Left ventricle myocardium superior (tissue), 1 donor: ENCODE measurements at regions of chr19 and their contacts with region 1.

Region 1: GRCh38 chr19:6048808-6049405 is 61.4 kb downstream of the RFX2 start:
- DNase-seq: peak; percentile 82
- ATAC-seq: peak; percentile 97

Region 2: GRCh38 chr19:6103217-6103644 is 54.3 kb after region 1 on chr19:
- intact Hi-C with region 1: no loop called
- DNase-seq: peak; percentile 79
- ATAC-seq: peak; percentile 86

Region 3: DNA sequence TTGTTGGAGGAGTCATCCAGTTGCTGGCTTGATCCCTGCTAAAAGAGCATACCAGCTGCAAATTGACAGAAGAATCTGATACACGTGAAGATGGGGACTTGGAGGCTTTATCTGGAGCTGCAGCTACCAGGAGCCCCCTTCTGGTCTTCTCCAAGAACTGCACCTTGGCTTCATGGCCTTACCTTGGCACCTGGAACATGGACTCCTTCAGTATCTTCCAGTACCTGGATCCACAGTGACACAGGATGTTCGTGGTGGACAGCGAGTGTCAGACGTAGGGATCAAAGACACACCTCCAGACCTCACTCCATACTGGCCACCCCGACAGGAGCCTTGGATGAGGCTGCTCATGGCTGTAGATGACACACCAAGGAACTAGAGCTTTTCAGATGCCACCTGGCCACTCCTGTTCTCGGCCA is 76.7 kb after region 1 on chr19:
- intact Hi-C with region 1: loop called (anchors 2 kb)
- DNase-seq: peak; percentile 44
- ATAC-seq: peak; percentile 88